Heart left ventricle (tissue), 16 donors: ENCODE measurements at regions of chr7 and their contacts with region 1.

Region 1: GRCh38 chr7:151448261-151449252 is 8.6 kb upstream of the CRYGN start:
- DNase-seq: peak; percentile 64 to 82 (median 68)
- ATAC-seq: peak; percentile 45 to 92 (median 85)
- H3K4me3 ChIP-seq: peak overlapping the region; percentile 10 to 79 (median 60)
- H3K27ac ChIP-seq: peak overlapping the region in 5 of 12 donors; percentile 17 to 69 (median 31)
- H3K4me1 ChIP-seq: peaks cover 0 to 9% (median 0%) of the 10 kb centered on the region in 12 donors
- H3K27me3 ChIP-seq: peaks cover 0 to 4% (median 0%) of the 10 kb centered on the region in 9 donors
- CTCF ChIP-seq: peak; percentile 70 to 87 (median 81)
- POLR2A ChIP-seq: no peak

Region 2: GRCh38 chr7:151315038-151315655 is 133.4 kb before region 1 on chr7:
- intact Hi-C with region 1: loop called in 4 of 10 experiments (anchors 2 to 5 kb)
- DNase-seq: peak in 4 of 5 donors; percentile 62 to 74 (median 66)
- ATAC-seq: peak in 3 of 4 donors; percentile 53 to 84 (median 84)
- H3K4me3 ChIP-seq: peak overlapping the region in 1 of 12 donors; percentile 1
- H3K27ac ChIP-seq: no peak overlapping the region
- H3K4me1 ChIP-seq: peaks cover 0 to 15% (median 6%) of the 10 kb centered on the region in 12 donors
- H3K27me3 ChIP-seq: no peaks in the 10 kb centered on the region
- CTCF ChIP-seq: peak; percentile 73 to 92 (median 80)
- POLR2A ChIP-seq: no peak

Region 3: GRCh38 chr7:151368136-151368571 is 80.4 kb before region 1 on chr7:
- intact Hi-C with region 1: loop called (anchors 1 to 5 kb)
- DNase-seq: peak; percentile 79 to 88 (median 85)
- ATAC-seq: peak; percentile 84 to 97 (median 96)
- H3K4me3 ChIP-seq: no peak overlapping the region
- H3K27ac ChIP-seq: peak overlapping the region in 1 of 12 donors; percentile 63
- H3K4me1 ChIP-seq: peaks cover 0 to 17% (median 6%) of the 10 kb centered on the region in 12 donors
- H3K27me3 ChIP-seq: no peaks in the 10 kb centered on the region
- CTCF ChIP-seq: peak; percentile 91 to 98 (median 95)
- POLR2A ChIP-seq: no peak

Region 4: DNA sequence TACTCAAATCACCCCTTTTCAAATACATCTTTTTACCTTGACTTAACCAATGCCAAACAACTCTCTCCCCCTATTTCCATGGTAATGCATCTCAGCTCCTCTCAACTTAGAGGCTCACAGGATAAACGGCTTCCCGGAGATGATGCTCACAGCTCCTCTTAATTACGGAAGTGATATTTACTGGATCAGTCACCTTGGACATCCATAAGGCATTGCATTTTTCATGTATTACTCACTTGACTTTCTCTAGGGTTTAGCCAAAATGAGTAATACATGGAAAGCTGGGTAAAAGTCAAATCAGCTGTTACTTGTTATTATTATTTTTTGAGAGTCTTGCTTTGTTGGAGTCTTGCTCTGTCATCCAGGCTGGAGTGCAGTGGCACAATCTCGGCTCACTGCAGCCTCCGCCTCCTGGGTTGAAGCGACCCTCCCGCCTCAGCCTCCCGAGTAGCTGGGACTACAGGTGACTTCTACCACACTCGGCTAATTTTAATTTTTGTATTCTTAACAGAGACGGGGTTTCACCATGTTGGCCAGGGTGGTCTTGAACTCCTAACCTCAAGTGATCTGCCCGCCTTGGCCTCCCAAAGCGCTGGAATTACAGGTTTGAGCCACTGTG is 144.4 kb after region 1 on chr7:
- intact Hi-C with region 1: no loop called
- DNase-seq: no peak
- ATAC-seq: peak in 1 of 4 donors; percentile 62
- H3K4me3 ChIP-seq: no peak overlapping the region
- H3K27ac ChIP-seq: no peak overlapping the region
- H3K4me1 ChIP-seq: peaks cover 0 to 30% (median 7%) of the 10 kb centered on the region in 12 donors
- H3K27me3 ChIP-seq: no peaks in the 10 kb centered on the region
- CTCF ChIP-seq: no peak
- POLR2A ChIP-seq: no peak